BJ (cell line): ENCODE measurements at regions of chr11 and their contacts with region 1.

Region 1: GRCh38 chr11:83736689-83737088 is 450.5 kb upstream of the CCDC90B start:
- DNase-seq: no peak
- H3K4me3 ChIP-seq: no peak overlapping the region
- H3K27me3 ChIP-seq: 0 out of 2 replicates have a peak, but pooled peaks cover 1% of the 10 kb centered on the region
- CTCF ChIP-seq: no peak

Region 2: GRCh38 chr11:82906244-82906654 is 830.4 kb before region 1 on chr11:
- CTCF ChIA-PET with region 1: no interaction called
- POLR2A ChIA-PET with region 1: interaction called, 16 read pairs
- DNase-seq: no peak
- H3K4me3 ChIP-seq: no peak overlapping the region
- H3K27me3 ChIP-seq: no peaks in the 10 kb centered on the region
- CTCF ChIP-seq: peak; percentile 41

Region 3: DNA sequence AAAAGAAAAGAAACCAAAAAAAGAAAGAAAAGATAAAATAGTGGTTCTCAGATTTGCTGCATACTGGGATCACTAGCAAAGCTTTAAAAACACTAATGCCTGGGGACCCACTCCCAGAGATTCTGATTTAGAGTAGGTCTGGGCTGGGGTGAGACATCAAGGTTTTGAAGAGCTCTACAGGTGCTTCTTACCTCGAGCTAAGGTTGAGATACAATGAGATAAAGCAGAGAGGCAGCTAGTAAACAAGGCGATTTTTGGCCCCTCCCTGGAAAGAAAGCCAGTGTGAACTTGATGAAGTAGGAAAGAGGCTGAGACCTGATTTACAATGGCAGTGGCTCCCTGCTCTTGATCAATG is 122.9 kb before region 1 on chr11:
- CTCF ChIA-PET with region 1: no interaction called
- POLR2A ChIA-PET with region 1: no interaction called
- DNase-seq: no peak
- H3K4me3 ChIP-seq: no peak overlapping the region
- H3K27me3 ChIP-seq: peaks cover 3% of the 10 kb centered on the region; the same call in 1 of the 2 replicates
- CTCF ChIP-seq: no peak